ENCODE measurements at regions of chr17 and their contacts with region 1.

Region 1: GRCh38 chr17:64025732-64026294 is 5.4 kb upstream of the ICAM2 start:
- DNase-seq: peak; percentile 75 to 79
- H3K4me3 ChIP-seq: no peak overlapping the region
- H3K27ac ChIP-seq: peak overlapping the region in 1 of 3 donors; percentile 1
- H3K4me1 ChIP-seq: peaks cover 0 to 10% of the 10 kb centered on the region in 2 donors
- H3K27me3 ChIP-seq: no peaks in the 10 kb centered on the region
- CTCF ChIP-seq: peak; percentile 86 to 94 (median 92)
- POLR2A ChIP-seq: no peak

Region 2: DNA sequence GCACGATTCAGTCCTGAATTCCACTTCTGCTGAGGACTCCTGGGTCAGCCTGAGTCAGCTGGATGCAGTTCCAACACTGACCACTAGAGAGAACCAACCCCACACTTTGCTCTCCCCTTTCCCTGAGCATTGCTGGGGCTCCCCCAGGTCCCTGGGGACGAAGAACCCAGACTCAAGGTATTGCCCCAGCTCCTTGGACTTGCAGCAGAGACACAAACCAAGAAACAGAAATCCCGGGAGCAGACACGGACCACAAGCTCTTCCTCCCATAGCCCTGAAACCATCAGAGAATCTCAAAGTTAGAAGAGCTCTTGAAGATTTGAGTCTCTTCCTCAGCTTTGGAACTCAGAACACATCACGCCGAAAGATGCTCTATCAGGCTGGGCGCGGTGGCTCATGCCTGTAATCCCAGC is 106.5 kb before region 1 on chr17:
- intact Hi-C with region 1: loop called (anchors 5 kb)
- DNase-seq: peak; percentile 51 to 54
- H3K4me3 ChIP-seq: no peak overlapping the region
- H3K27ac ChIP-seq: no peak overlapping the region
- H3K4me1 ChIP-seq: no peaks in the 10 kb centered on the region
- H3K27me3 ChIP-seq: no peaks in the 10 kb centered on the region
- CTCF ChIP-seq: peak; percentile 90 to 96 (median 94)
- POLR2A ChIP-seq: no peak

Region 3: DNA sequence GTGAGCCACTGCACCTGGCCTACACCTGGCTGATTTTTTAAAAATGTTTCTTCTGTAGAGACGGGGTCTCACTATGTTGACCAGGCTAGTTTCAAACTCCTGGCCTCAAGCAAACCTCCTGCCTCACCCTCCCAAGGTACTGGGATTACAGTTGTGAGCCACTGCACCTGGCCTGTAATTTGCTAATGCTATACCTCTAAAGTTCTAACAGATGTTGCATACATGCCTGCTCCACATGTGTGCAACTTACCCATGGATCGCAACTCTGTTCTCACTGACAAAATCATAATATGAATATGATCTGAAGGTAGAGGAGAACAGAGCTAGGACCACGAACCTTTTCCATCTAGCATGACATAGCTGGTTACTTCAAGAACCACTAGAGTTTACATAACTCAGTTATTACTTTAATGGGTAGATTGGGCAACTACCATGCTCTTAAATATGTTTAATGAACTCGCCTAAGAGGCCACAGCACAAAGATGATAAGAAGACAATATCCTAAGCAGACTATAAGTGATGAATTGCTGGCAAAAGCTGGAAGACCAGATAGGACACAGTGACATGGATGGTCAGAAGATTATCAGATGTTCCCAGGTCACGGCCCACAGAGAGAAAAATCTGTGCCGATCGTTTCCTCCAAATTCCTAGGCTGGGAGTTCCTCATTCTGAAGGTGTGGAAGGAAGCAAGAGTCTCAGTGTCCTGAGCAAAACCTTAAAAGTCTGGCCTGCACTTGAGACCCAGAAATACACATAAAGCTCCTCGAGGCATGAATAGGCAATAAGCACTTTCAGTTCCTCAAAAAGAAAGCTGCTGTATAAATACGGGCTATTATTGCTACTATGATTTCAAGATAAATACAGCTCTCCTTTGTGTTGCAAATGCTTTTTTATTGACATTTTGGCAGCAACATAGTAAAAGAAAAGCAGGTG is 48.2 kb after region 1 on chr17:
- intact Hi-C with region 1: no loop called
- DNase-seq: peak in 1 of 2 donors; percentile 10
- H3K4me3 ChIP-seq: no peak overlapping the region
- H3K27ac ChIP-seq: peak overlapping the region; percentile 68 to 72 (median 72)
- H3K4me1 ChIP-seq: peaks cover 16 to 40% of the 10 kb centered on the region in 2 donors
- H3K27me3 ChIP-seq: no peaks in the 10 kb centered on the region
- CTCF ChIP-seq: no peak
- POLR2A ChIP-seq: no peak